ENCODE measurements at regions of chr3 and their contacts with region 1.

Region 1: DNA sequence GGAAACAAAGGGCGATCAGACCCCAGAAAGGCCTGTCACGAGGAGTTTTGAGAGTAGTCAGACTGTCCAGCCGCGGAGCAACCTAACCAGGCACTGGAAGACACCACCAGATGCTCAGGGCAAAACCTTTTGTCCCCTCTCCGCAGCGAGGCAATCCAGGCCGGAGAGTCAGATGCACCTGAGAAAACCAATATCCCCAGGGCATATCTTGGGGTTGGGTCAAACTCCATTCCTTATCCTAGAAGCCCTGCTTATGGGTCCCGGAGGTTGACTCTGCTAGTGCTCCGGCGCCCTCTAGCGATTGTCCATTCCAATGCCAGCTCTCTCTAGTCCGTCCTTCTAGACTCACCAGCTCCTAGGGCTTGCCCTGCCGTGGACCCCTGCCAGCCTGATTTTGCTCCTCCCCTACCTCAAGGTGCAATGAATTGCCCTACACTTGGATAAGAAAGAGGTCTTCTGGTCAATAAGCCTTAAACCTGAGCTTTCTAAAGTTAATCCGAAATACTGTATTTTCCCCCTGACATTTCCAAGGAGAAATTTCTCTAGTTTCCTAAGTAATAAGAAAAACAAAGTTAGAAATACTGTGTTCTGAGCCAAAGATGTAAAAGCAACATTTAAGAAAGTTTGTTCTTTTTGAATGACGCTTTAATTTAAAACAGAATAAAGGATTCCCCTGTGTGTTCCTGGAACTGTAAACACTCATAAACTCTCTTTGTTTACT is 5.5 kb downstream of the CPNE4 start:
- DNase-seq: peak; percentile 69
- ATAC-seq: peak; percentile 100
- H3K4me3 ChIP-seq: no peak overlapping the region
- H3K27ac ChIP-seq: no peak overlapping the region
- H3K4me1 ChIP-seq: no peaks in the 10 kb centered on the region
- H3K27me3 ChIP-seq: peaks cover 31% of the 10 kb centered on the region
- CTCF ChIP-seq: peak; percentile 71 to 92 (median 88)
- POLR2A ChIP-seq: no peak
- RAD21 ChIP-seq: peak; percentile 86

Region 2: DNA sequence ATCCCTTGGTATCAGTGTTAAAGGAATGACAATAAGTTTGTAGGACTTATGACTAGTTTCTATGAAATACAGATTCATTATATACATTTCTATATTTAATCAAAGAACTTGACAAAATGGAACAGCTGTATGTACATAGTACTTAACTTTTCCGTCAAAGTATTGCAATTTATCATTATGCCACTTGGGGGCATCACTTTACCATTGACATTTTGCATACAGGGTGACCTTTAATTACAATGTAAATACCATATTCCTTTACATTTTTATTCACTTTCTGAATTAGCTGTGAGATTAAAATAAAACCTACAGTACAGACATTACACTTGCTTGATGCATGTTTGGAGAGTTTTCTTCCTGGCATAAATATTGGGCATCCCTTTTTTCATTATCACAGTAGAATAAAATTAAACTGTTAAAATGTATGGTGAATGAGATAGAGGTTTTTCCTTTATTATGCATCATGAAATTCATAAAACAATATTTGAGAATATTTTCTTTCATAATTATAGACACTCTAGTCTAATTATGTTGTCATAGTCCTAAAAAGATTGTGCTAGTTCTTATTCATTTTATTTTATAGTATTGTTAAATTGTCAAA is 995.8 kb before region 1 on chr3:
- CTCF ChIA-PET with region 1: interaction called, 7 read pairs
- POLR2A ChIA-PET with region 1: no interaction called
- RAD21 ChIA-PET with region 1: no interaction called
- intact Hi-C with region 1: loop called (anchors 1 kb)
- DNase-seq: peak; percentile 41
- ATAC-seq: peak; percentile 65
- H3K4me3 ChIP-seq: no peak overlapping the region
- H3K27ac ChIP-seq: no peak overlapping the region
- H3K4me1 ChIP-seq: no peaks in the 10 kb centered on the region
- H3K27me3 ChIP-seq: no peaks in the 10 kb centered on the region
- CTCF ChIP-seq: peak; percentile 37 to 76 (median 55); a peak in 5 of 6 replicates
- POLR2A ChIP-seq: no peak
- RAD21 ChIP-seq: peak; percentile 72

Region 3: GRCh38 chr3:131053043-131053859 is 976.1 kb before region 1 on chr3:
- CTCF ChIA-PET with region 1: no interaction called
- POLR2A ChIA-PET with region 1: no interaction called
- RAD21 ChIA-PET with region 1: no interaction called
- intact Hi-C with region 1: loop called (anchors 1 kb)
- DNase-seq: no peak
- ATAC-seq: no peak
- H3K4me3 ChIP-seq: no peak overlapping the region
- H3K27ac ChIP-seq: no peak overlapping the region
- H3K4me1 ChIP-seq: no peaks in the 10 kb centered on the region
- H3K27me3 ChIP-seq: no peaks in the 10 kb centered on the region
- CTCF ChIP-seq: peak in 2 of 3 experiments; percentile 39 to 42; a peak in 2 of 6 replicates
- POLR2A ChIP-seq: no peak
- RAD21 ChIP-seq: peak; percentile 55

Region 4: DNA sequence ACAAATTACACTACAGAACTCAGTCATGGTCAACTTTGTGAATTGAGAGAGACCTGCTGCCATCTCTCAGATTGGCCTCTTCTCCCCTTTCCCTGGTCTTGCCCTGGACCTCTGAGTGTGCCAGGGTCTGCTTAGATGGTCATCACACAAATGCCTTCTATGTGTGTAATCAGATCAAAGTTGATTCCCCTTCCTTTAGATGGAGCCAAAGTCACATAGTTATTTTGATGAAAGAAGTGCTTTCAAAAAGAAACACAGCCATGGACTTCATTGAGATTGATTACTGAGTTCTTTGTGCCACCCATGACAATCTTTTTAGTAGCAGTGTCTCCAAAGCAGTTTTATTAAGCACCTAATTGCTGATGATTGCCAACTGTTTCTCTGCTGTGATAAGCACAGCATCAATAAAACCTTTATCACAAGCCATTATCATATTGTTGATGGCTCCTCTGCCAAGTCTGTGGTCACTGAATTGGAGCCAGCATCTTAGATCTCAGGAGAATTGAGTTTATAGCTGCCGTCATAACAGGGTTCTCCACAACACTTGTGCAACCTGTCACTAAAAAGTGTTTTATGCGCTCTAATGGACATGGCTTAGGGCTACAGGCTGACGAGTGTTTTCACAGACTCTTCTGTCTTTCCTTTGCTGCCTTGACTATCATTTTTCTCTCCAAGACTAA is 797.5 kb before region 1 on chr3:
- CTCF ChIA-PET with region 1: no interaction called
- POLR2A ChIA-PET with region 1: no interaction called
- RAD21 ChIA-PET with region 1: no interaction called
- intact Hi-C with region 1: loop called (anchors 2 kb)
- DNase-seq: no peak
- ATAC-seq: peak; percentile 63
- H3K4me3 ChIP-seq: no peak overlapping the region
- H3K27ac ChIP-seq: no peak overlapping the region
- H3K4me1 ChIP-seq: no peaks in the 10 kb centered on the region
- H3K27me3 ChIP-seq: no peaks in the 10 kb centered on the region
- CTCF ChIP-seq: peak in 2 of 3 experiments; percentile 18 to 29; a peak in 2 of 6 replicates
- POLR2A ChIP-seq: no peak
- RAD21 ChIP-seq: peak; percentile 45

Region 5: GRCh38 chr3:131794766-131795388 is 234.5 kb before region 1 on chr3:
- CTCF ChIA-PET with region 1: interaction called, 5 read pairs
- POLR2A ChIA-PET with region 1: no interaction called
- RAD21 ChIA-PET with region 1: no interaction called
- intact Hi-C with region 1: loop called (anchors 1 kb)
- DNase-seq: peak; percentile 39
- ATAC-seq: peak; percentile 93
- H3K4me3 ChIP-seq: no peak overlapping the region
- H3K27ac ChIP-seq: no peak overlapping the region
- H3K4me1 ChIP-seq: no peaks in the 10 kb centered on the region
- H3K27me3 ChIP-seq: peaks cover 12% of the 10 kb centered on the region; the same call in 1 of the 2 replicates
- CTCF ChIP-seq: peak; percentile 78 to 97 (median 83)
- POLR2A ChIP-seq: no peak
- RAD21 ChIP-seq: peak; percentile 69

Region 6: GRCh38 chr3:132210476-132211346 is 181.4 kb after region 1 on chr3:
- CTCF ChIA-PET with region 1: no interaction called
- POLR2A ChIA-PET with region 1: no interaction called
- RAD21 ChIA-PET with region 1: no interaction called
- intact Hi-C with region 1: loop called (anchors 2 kb)
- DNase-seq: peak; percentile 39
- ATAC-seq: peak; percentile 97
- H3K4me3 ChIP-seq: no peak overlapping the region
- H3K27ac ChIP-seq: no peak overlapping the region
- H3K4me1 ChIP-seq: no peaks in the 10 kb centered on the region
- H3K27me3 ChIP-seq: peaks cover 11% of the 10 kb centered on the region; the same call in 1 of the 2 replicates
- CTCF ChIP-seq: peak; percentile 60 to 85 (median 85); a peak in 5 of 6 replicates
- POLR2A ChIP-seq: no peak
- RAD21 ChIP-seq: peak; percentile 75

Region 7: DNA sequence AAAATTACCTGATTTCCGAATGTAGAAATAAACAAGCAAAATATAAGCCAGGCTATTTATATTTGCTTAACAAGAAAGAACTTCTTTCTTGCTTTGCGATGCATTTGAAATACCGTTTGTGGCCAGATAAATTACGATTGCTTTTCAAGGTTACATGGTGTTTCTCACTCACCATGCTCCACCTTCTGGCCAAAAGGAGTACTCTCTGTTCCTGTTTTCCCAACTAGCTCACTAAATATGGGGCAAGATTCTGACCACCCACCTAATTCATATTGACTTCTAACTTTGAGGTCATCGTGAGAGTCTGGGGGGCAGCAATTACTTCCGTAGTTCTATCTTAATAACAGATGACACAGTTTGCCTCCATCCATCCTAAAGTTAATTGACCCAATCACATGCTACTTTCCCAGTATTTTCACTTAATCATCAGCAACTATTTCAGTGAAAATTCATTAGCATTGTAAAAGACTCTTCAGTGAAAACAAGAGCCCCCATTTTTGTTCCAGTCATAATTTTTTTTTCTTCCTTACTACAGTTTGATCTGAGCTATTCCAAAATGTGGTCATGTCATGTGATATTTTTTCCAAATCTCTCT is 313.8 kb after region 1 on chr3:
- CTCF ChIA-PET with region 1: no interaction called
- POLR2A ChIA-PET with region 1: no interaction called
- RAD21 ChIA-PET with region 1: no interaction called
- intact Hi-C with region 1: loop called (anchors 5 kb)
- DNase-seq: peak; percentile 50
- ATAC-seq: peak; percentile 90
- H3K4me3 ChIP-seq: no peak overlapping the region
- H3K27ac ChIP-seq: no peak overlapping the region
- H3K4me1 ChIP-seq: peaks cover 0 to 8% of the 10 kb centered on the region in 2 experiments; a peak in 3 of 4 replicates
- H3K27me3 ChIP-seq: no peaks in the 10 kb centered on the region
- CTCF ChIP-seq: peak; percentile 78 to 87 (median 85)
- POLR2A ChIP-seq: no peak
- RAD21 ChIP-seq: peak; percentile 83